Left cardiac atrium (tissue), 4 donors: ENCODE measurements at regions of chr21 and their contacts with region 1.

Region 1: DNA sequence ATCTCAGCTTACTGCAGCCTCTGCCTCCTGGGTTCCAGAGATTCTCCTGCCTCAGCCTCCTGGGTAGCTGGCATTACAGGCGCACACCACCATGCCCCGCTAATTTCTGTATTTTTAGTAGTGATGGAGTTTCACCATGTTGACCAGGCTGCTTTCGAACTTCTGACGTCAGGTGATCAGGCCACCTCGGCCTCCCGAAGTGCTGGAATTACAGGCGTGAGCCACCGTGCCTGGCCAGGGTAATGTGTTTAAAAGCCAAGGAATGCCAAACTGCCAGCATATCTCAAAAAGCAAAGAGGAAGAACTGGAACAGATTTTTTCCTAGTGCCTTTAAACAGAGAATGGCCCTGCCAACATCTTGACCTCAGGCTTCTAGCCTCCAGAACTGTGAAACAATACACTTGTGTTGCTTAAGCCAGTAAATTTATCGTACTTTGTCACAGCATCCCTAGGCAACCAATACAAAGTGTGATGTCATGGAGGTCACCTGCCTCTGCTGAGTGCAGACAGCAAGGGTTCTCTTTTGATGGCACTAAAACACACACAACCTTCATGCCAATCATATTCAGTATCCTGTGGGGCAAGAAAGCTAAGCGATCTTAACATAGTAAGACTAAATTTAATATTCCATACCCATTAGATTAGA is 858.3 kb upstream of the TMPRSS15 start:
- DNase-seq: no peak
- ATAC-seq: peak in 1 of 2 donors; percentile 23

Region 2: DNA sequence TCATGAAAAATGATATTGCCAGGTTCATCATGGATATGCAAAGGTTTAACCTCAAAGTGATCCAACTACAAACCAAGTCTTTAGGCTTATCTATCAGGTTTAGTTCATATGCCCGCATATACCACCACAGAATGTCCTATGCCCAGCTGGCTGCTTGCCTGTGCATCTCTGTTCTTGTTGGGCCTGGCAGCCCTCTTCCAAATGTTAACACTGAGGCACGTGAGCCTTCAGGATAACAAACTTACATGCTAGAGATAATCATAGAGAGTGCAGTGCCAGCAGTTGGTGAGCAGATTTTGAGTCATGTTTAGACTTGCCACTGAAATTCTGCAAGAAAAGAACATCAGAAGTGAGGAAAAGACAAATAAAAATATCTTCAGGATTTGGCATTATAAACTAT is 250.4 kb before region 1 on chr21:
- intact Hi-C with region 1: loop called in 1 of 2 experiments (anchors 10 kb)
- DNase-seq: peak; percentile 24
- ATAC-seq: peak; percentile 79 to 81

Region 3: DNA sequence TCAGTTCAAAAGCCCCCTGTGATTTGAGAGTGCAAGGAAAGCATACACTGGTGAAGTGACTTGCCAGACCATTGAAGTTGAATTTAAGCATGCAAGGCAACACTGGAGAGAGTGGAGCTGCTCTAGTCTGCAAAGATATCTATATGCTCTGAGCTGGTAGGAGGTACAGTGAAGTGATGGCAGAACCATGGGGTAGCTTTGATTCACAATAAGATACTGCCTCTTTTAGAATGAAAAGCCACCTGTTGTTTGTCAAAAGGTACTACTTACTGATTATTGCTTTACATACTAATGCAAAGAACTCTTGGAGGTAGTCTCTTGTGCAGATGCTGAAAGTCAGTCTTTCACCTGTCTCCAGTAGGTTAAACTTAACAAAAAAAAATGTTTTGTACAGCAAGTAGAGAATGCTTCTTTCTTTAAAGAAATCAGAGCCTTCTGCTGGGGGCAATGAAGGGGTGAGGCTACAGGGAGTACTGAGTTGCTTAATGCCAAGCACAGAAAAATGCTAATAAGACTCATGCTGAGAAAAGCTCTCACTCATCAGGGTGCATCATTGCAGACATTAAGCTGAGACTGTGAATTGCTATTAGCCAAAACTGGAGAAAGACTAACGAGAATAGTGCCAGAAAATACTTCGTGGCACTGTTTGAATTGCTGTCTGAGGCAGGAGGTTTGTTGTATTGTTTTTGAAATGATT is 292.2 kb after region 1 on chr21:
- intact Hi-C with region 1: no loop called
- DNase-seq: no peak
- ATAC-seq: no peak